ENCODE measurements at regions of chr6 and their contacts with region 1.

Region 1: DNA sequence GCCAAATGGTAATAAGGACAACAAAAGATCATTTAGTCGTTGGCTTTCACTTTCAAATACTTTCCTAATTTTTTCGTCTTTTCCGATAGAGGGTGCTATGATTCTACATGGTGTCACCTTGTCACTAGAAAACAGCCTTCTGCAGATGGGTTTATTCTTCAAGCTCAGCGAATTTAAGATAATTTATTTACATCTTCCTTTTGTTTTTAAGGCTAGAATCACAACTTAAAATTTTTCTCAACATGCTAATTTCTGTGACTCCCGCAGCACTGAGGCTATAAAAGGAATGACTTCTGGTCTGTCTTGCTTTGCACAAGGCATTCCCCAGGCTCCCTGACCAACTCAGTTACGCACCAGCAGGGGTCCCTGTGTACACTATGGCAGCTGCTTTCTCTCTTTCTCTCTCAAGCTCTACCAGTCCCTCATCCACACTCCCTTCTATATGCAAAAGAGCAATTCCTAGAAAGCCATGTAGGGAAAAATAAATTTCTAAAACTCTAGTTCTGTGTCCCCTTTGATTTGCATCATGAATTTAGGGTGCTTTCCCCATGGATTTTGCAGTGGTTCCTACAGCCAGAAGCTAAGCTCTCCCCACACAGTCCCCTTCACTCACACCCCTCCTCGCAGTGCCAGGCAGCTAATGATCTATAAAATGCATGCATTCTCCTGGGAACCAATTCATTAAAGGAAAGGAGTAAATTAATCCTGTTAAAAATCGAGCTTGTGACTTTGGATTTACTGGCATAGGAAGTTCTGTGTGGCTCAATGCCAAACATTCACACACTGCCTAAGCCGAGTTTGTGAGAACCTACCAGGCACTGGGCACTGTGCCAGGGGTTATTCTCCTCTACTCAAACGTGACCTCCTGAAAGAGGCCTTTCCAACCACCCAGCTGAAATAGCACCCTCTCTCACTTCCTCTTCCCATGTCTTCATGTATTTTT is 74.5 kb downstream of the DCDC2 start:
- DNase-seq: peak; percentile 62
- H3K4me3 Mint-ChIP-seq: no peak overlapping the region
- H3K27ac Mint-ChIP-seq: no peak overlapping the region
- H3K4me1 Mint-ChIP-seq: peaks cover 6% of the 10 kb centered on the region
- H3K27me3 Mint-ChIP-seq: peaks cover 3% of the 10 kb centered on the region

Region 2: GRCh38 chr6:22754061-22754460 is 1529.3 kb before region 1 on chr6:
- CTCF ChIA-PET with region 1: no interaction called
- intact Hi-C with region 1: no loop called
- DNase-seq: no peak
- H3K4me3 Mint-ChIP-seq: no peak overlapping the region
- H3K27ac Mint-ChIP-seq: no peak overlapping the region
- H3K4me1 Mint-ChIP-seq: no peaks in the 10 kb centered on the region
- H3K27me3 Mint-ChIP-seq: no peaks in the 10 kb centered on the region

Region 3: DNA sequence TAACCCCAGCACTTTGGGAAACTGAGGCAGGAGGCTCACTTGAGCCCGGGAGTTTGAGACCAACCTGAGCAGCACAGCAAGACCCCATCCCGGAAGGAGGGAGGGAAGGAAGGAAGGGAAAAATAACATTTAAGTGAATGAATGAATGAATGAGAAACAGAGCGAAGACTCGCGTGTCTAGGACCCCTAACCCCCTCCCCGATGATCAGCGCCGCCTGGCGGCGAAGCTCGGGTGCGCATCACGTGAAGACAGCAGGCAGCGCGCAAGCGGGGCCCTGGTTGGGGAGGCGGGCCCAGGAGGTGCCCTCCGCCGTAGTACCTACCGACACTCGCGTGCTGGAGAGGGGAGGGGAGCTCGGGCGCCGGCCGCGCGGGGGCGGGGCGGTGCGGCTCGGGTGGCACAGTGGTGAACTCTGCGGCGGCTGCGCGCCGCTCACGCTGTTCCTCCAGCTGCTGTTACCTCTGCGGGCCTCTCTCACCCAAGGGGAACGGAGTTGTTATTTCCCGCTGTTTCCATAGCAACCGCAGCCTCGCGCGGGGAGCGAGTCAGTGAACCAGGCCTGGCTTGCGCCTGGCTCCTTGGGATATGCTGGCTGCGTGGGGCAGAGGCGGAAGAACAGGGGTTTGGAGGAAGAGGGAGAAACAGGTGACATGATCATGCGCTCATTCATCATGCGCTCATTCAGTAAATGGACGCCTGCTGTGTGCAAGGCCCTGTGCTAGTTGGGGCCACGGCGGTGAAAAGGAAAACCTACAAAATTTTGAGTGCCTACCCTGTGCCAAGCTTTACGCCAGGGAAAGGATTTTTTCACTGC is 76.5 kb after region 1 on chr6:
- CTCF ChIA-PET with region 1: interaction called, 12 read pairs
- intact Hi-C with region 1: loop called (anchors 1 kb)
- DNase-seq: peak; percentile 93
- H3K4me3 Mint-ChIP-seq: peak overlapping the region; percentile 79
- H3K27ac Mint-ChIP-seq: peak overlapping the region; percentile 28
- H3K4me1 Mint-ChIP-seq: peaks cover 25% of the 10 kb centered on the region
- H3K27me3 Mint-ChIP-seq: peaks cover 9% of the 10 kb centered on the region

Region 4: DNA sequence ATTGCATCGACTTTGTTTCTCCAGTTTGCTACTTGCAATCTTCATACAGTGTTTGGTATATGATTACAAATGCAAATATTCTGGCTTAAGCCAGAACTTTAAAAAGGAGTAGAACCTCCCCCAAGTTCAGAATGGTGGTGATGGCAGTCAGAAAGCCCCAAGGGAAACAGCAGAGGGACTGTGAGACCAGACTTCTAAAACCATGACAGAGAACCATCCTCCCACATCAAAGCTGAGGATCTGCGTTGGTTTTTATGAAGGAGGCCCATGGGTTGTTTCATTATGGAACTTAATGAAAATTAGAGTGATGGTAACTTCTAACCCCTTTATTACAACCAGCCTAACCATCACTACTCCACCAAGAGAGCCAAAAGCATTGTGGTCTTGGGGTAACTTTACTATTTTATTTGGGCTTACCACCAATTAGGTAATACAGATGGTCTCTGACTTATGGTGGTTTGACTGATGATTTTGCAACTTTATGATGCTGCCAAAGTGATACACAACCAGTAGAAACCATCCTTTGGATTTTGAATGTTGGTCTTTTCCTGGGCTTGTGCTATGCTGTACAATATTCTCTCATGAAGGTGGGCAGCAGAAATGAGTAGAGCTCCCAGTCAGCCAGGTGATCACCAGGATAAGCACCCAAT is 108.6 kb after region 1 on chr6:
- CTCF ChIA-PET with region 1: interaction called, 22 read pairs
- intact Hi-C with region 1: loop called (anchors 1 kb)
- DNase-seq: no peak
- H3K4me3 Mint-ChIP-seq: no peak overlapping the region
- H3K27ac Mint-ChIP-seq: no peak overlapping the region
- H3K4me1 Mint-ChIP-seq: no peaks in the 10 kb centered on the region
- H3K27me3 Mint-ChIP-seq: peaks cover 7% of the 10 kb centered on the region

Region 5: GRCh38 chr6:24402697-24403501 is 119.6 kb after region 1 on chr6 and contains the start of gene MRS2:
- CTCF ChIA-PET with region 1: interaction called, 4 read pairs
- intact Hi-C with region 1: loop called (anchors 1 kb)
- DNase-seq: peak; percentile 76
- H3K4me3 Mint-ChIP-seq: peak within 1 kb of the TSS; percentile 86
- H3K27ac Mint-ChIP-seq: peak within 1 kb of the TSS; percentile 36
- H3K4me1 Mint-ChIP-seq: peaks cover 30% of the 10 kb centered on the region
- H3K27me3 Mint-ChIP-seq: peaks cover 9% of the 10 kb centered on the region
- total RNA-seq, gene MRS2: 18.9 to 19.8 TPM

Region 6: GRCh38 chr6:24440897-24441598 is 157.7 kb after region 1 on chr6:
- CTCF ChIA-PET with region 1: no interaction called
- intact Hi-C with region 1: no loop called
- DNase-seq: no peak
- H3K4me3 Mint-ChIP-seq: no peak overlapping the region
- H3K27ac Mint-ChIP-seq: no peak overlapping the region
- H3K4me1 Mint-ChIP-seq: no peaks in the 10 kb centered on the region
- H3K27me3 Mint-ChIP-seq: no peaks in the 10 kb centered on the region

Region 7: GRCh38 chr6:24520929-24521546 is 237.7 kb after region 1 on chr6:
- CTCF ChIA-PET with region 1: interaction called, 4 read pairs
- intact Hi-C with region 1: loop called (anchors 10 kb)
- DNase-seq: peak; percentile 62
- H3K4me3 Mint-ChIP-seq: no peak overlapping the region
- H3K27ac Mint-ChIP-seq: no peak overlapping the region
- H3K4me1 Mint-ChIP-seq: peaks cover 8% of the 10 kb centered on the region
- H3K27me3 Mint-ChIP-seq: no peaks in the 10 kb centered on the region

Region 8: DNA sequence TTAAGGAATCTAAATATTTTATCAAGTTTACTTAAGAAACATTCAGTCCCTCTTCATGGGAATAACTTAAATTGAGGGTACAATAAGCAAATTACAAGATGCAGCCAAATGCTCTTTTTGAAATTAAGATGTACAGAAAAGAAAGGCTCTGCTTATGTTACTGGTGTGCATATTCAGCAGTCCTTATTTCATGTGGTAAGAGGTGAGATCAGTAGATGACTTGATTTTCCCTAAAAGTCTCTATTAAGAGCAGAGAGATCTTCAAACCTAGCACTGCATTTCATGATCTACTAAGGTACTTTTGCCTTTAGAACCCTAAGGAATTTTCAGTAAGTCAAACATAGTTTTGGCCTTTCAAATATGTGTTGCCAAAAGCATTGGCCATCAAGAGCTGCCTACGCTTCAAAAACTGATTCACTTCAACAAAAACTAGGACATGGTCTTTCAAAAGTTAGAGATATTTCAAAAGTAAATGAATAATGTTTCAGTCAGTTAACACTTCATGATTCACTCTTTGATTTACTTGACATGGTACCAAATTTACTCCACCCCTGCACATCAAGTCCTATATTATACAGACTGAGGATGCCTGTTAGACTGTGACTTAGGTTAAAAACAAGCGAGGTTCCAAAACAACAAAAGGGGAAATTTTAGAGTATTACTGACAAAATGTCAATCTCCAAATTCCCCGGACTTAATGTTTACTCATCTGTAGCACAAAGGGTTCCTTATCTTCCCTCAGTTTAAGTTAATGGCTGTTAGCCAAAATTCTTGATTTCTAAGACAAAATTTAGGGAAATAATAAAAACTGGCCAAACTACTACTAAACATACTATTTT is 416.4 kb after region 1 on chr6:
- CTCF ChIA-PET with region 1: no interaction called
- intact Hi-C with region 1: loop called (anchors 1 kb)
- DNase-seq: no peak
- H3K4me3 Mint-ChIP-seq: no peak overlapping the region
- H3K27ac Mint-ChIP-seq: peak overlapping the region; percentile 84
- H3K4me1 Mint-ChIP-seq: peaks cover 45% of the 10 kb centered on the region
- H3K27me3 Mint-ChIP-seq: no peaks in the 10 kb centered on the region

Region 9: GRCh38 chr6:24766680-24767462 is 483.6 kb after region 1 on chr6:
- CTCF ChIA-PET with region 1: no interaction called
- intact Hi-C with region 1: loop called (anchors 1 kb)
- DNase-seq: no peak
- H3K4me3 Mint-ChIP-seq: no peak overlapping the region
- H3K27ac Mint-ChIP-seq: no peak overlapping the region
- H3K4me1 Mint-ChIP-seq: peaks cover 3% of the 10 kb centered on the region
- H3K27me3 Mint-ChIP-seq: no peaks in the 10 kb centered on the region